ENCODE measurements at regions of chr22 and their contacts with region 1.

Region 1: DNA sequence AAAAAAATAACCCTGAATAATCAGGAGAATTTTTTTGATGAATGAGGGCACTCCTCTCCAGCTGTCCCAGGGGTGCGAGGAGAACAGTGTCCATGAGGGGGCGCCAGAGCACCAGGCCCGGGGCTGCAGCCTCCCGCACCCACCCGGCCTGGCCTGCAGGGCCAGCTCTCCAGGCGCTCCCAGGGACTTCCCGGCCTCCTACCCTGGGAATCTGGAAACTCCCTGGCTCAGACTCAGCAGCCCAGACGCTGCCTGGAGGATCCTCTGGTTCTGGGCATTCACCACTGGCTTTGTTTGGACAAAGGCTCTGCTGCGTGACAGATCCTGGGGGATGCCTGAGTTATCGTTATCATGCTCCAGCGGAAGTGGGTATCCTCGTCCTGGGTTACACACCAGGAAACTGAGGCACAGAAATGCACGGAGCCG is 31.0 kb downstream of the MCM5 start:
- DNase-seq: peak; percentile 93
- ATAC-seq: peak; percentile 97

Region 2: GRCh38 chr22:35582861-35583670 is 152.2 kb after region 1 on chr22:
- intact Hi-C with region 1: loop called (anchors 2 kb)
- DNase-seq: peak; percentile 68
- ATAC-seq: peak; percentile 75

Measured in sciatic nerve (tissue), 2 donors.